Head of caudate nucleus (tissue), 42 donors: ENCODE measurements at regions of chr4 and their contacts with region 1.

Region 1: DNA sequence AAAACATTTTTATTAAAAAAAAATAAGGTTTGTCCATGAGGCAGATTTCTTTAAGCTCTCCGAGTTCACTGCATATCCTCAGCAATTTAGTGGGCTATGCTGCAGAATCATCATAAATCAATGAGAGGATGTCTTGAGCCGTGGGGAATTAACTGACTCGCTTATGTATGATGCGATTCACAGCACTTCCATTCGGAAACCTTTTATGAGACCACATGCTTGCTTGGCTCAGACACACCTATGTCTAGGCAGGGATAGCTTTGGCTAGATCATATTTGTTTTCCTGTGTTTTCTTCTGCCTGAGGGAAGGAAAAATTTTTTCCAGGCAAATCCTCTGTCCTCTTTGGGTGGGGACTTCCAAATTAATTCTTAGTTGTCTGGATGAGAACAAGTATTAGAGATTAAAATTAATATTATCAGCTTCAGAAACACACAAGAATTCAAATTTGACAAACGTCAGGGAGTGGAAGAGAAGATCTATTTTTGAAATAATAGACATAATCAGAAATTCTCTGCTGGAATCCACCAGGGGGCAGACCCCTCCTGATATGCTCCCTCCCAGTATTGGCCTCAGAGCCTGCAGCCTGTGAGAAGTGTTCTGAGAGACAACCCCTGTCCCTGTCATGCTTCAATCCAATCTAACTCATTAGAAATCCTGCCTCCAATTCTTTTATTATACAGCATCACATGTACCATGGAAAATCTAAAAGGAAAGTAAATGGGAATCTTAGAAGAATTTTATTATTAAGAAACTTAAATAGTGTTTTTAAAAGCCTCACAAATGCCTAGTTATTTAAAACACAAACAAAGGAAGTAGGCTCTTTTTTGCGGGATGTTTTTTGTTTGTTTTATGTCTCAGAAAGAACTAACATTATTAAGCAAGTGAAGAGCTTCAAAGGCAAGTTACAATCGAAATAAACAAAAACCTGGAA is 345.1 kb upstream of the TACR3 start:
- DNase-seq: peak; percentile 60 to 93 (median 82)

Region 2: DNA sequence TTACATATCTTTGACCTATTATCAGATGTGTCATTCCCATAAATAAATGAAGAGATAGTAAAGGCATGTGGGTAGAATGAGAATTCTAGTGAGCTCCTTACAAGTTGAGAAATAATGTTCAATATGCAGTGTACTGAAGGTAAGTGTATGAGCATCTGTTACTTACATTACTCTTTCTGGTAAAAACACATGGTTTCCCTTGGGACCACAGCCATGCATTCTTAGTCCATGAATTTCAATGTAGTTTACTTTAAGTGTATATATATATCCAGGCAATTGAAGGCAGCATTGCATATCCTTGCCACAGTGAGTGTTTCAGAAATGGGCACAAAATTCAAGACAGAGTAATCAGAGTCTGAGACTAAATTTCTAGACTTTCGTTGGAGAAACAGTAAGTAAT is 152.6 kb after region 1 on chr4:
- intact Hi-C with region 1: no loop called
- DNase-seq: no peak

Region 3: GRCh38 chr4:104490770-104491480 is 426.0 kb after region 1 on chr4:
- intact Hi-C with region 1: loop called (anchors 10 kb)
- DNase-seq: peak; percentile 45 to 90 (median 77)